Heart right ventricle (tissue), 16 donors: ENCODE measurements at regions of chr12 and their contacts with region 1.

Region 1: DNA sequence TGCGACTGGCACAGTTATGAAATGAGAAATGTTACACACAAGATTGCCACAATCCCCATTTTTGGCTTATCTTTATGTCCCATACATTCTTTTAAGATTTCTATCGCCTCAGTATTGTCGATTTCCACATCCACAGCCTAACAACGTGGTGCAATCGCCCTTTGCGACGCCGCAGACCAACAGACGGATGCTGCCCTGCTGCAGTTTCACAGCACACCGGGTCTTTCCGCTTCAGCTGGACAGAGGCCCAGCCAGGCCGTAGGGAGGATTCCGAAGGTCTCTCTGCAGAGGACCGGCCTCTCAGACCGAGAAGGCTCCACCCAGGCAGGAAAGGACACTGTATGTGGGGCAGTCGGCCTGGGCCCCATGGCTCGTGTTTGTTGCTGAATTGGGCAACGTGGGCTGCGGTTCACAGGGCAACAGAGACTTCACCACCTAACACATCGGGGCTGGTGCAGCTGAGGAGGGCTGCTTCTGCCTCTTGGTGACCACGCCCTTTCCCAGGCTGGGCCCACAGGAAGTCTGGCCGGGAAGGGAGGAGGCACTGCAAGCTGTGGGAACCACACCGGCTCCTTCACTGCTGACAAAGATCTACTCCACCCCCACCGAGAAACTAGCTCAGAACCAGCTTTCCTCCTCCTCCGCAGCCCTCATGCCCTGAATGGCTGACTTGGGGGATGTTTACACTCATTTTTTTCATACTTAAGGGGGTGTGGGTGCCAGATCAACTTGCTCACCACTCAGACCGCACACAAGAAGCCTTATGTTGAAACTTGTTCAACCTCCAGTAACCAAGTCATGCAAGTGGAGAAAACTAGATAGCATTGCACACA is 32.9 kb upstream of the MDM1 start:
- DNase-seq: peak; percentile 89 to 92
- ATAC-seq: peak; percentile 97 to 99 (median 98)
- H3K4me3 ChIP-seq: peak overlapping the region; percentile 4 to 56 (median 40)
- H3K27ac ChIP-seq: peak overlapping the region; percentile 65 to 93 (median 82)
- H3K4me1 ChIP-seq: peaks cover 0 to 69% (median 37%) of the 10 kb centered on the region in 9 donors
- H3K27me3 ChIP-seq: no peaks in the 10 kb centered on the region
- CTCF ChIP-seq: peak in 3 of 9 donors; percentile 23 to 37 (median 28)

Region 2: DNA sequence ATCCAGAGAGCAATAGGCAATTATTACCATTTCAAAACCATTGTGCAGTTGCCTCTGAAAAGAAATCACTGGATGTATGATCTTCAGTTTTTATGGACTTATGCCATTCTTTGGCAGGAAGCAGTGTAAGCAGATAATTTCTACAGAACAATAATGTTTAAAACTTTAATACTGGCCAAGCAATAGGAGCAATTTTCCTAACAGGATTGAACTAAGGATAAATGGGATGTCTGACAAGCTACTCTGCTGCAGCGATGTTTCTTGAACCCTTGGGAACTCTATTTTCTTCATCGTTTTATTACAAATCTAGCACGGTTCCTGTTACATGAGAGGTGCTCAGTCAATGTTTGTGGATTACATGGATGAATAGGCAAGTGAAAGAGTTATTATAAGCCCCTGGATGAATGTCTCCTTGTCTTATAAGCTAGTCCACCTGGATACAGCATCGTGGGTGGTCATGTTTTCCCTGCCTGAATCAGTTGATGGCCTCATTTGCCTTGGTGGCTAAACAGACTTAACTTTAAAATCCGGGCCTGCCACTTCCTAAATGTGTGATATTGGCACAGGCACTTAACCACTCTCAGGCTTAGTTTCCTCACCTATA is 35.2 kb after region 1 on chr12:
- intact Hi-C with region 1: loop called in 3 of 10 experiments (anchors 5 kb)
- DNase-seq: no peak
- ATAC-seq: peak in 1 of 8 donors; percentile 20
- H3K4me3 ChIP-seq: no peak overlapping the region
- H3K27ac ChIP-seq: peak overlapping the region in 1 of 10 donors; percentile 36
- H3K4me1 ChIP-seq: peaks cover 4 to 28% (median 17%) of the 10 kb centered on the region in 9 donors
- H3K27me3 ChIP-seq: no peaks in the 10 kb centered on the region
- CTCF ChIP-seq: no peak

Region 3: GRCh38 chr12:68406134-68406594 is 41.1 kb after region 1 on chr12:
- intact Hi-C with region 1: loop called in 5 of 10 experiments (anchors 2 to 5 kb)
- DNase-seq: peak; percentile 93 to 95
- ATAC-seq: peak; percentile 96 to 99 (median 98)
- H3K4me3 ChIP-seq: peak overlapping the region in 1 of 10 donors; percentile 25
- H3K27ac ChIP-seq: peak overlapping the region in 9 of 10 donors; percentile 63 to 84 (median 70)
- H3K4me1 ChIP-seq: peaks cover 6 to 36% (median 28%) of the 10 kb centered on the region in 9 donors
- H3K27me3 ChIP-seq: no peaks in the 10 kb centered on the region
- CTCF ChIP-seq: peak in 8 of 9 donors; percentile 14 to 62 (median 48)

Region 4: DNA sequence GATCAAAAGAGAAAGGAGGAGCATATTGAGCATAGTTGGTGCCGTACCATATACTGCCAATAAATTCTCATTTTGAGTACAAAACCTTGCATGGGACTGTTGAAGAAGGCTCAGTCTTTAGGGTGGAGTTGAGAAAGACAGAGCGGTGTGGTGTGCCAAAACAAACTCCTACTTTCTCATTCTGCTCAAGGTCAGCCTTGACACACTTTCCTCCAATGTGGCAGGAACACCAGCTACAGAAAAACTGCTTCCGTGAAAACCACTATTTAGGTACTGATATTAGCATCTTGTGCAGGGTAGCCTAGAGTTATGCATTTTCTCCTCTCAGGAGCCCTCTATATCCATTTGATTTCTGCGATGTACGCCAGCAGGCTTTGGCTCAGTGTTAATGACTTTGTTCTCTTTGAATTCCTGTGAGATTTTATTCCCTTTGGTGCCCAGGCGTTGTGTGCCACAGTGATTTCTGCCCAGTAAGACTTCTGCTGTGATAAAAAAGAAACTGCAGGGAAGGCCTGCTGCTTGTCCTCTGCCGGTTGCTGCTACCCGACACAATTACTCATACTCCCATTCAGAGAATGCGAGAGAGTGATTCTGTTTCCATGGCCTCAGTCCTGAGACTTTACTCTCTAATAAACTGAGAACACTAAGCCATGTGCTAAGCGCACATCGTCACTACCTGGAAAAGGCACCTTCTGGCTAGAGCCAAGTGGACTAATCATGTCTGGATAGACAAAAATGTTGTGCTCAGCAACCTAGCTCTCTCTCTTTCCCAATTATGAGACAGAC is 55.3 kb after region 1 on chr12:
- intact Hi-C with region 1: no loop called
- DNase-seq: no peak
- ATAC-seq: peak in 7 of 8 donors; percentile 27 to 66 (median 53)
- H3K4me3 ChIP-seq: no peak overlapping the region
- H3K27ac ChIP-seq: peak overlapping the region in 6 of 10 donors; percentile 6 to 60 (median 48)
- H3K4me1 ChIP-seq: peaks cover 0 to 30% (median 11%) of the 10 kb centered on the region in 9 donors
- H3K27me3 ChIP-seq: no peaks in the 10 kb centered on the region
- CTCF ChIP-seq: no peak

Region 5: GRCh38 chr12:68451261-68452077 is 86.4 kb after region 1 on chr12:
- intact Hi-C with region 1: loop called in 3 of 10 experiments (anchors 5 to 10 kb)
- DNase-seq: peak in 1 of 2 donors; percentile 19
- ATAC-seq: peak in 7 of 8 donors; percentile 44 to 77 (median 47)
- H3K4me3 ChIP-seq: peak overlapping the region in 4 of 10 donors; percentile 2 to 24 (median 12)
- H3K27ac ChIP-seq: peak overlapping the region in 7 of 10 donors; percentile 3 to 64 (median 56)
- H3K4me1 ChIP-seq: peaks cover 5 to 75% (median 48%) of the 10 kb centered on the region in 9 donors
- H3K27me3 ChIP-seq: no peaks in the 10 kb centered on the region
- CTCF ChIP-seq: no peak

Region 6: GRCh38 chr12:68521321-68521839 is 156.3 kb after region 1 on chr12:
- intact Hi-C with region 1: loop called in 1 of 10 experiments (anchors 10 kb)
- DNase-seq: no peak
- ATAC-seq: peak in 6 of 8 donors; percentile 50 to 82 (median 70)
- H3K4me3 ChIP-seq: peak overlapping the region in 1 of 10 donors; percentile 3
- H3K27ac ChIP-seq: peak overlapping the region; percentile 12 to 80 (median 47)
- H3K4me1 ChIP-seq: peaks cover 0 to 18% (median 8%) of the 10 kb centered on the region in 9 donors
- H3K27me3 ChIP-seq: no peaks in the 10 kb centered on the region
- CTCF ChIP-seq: no peak

Region 7: GRCh38 chr12:68538726-68539614 is 173.9 kb after region 1 on chr12:
- intact Hi-C with region 1: loop called in 1 of 10 experiments (anchors 5 kb)
- DNase-seq: peak; percentile 59 to 83
- ATAC-seq: peak; percentile 84 to 98 (median 95)
- H3K4me3 ChIP-seq: peak overlapping the region in 9 of 10 donors; percentile 1 to 45 (median 31)
- H3K27ac ChIP-seq: peak overlapping the region; percentile 60 to 87 (median 75)
- H3K4me1 ChIP-seq: peaks cover 0 to 25% (median 9%) of the 10 kb centered on the region in 9 donors
- H3K27me3 ChIP-seq: no peaks in the 10 kb centered on the region
- CTCF ChIP-seq: no peak